ENCODE measurements at regions of chr5 and their contacts with region 1.

Region 1: DNA sequence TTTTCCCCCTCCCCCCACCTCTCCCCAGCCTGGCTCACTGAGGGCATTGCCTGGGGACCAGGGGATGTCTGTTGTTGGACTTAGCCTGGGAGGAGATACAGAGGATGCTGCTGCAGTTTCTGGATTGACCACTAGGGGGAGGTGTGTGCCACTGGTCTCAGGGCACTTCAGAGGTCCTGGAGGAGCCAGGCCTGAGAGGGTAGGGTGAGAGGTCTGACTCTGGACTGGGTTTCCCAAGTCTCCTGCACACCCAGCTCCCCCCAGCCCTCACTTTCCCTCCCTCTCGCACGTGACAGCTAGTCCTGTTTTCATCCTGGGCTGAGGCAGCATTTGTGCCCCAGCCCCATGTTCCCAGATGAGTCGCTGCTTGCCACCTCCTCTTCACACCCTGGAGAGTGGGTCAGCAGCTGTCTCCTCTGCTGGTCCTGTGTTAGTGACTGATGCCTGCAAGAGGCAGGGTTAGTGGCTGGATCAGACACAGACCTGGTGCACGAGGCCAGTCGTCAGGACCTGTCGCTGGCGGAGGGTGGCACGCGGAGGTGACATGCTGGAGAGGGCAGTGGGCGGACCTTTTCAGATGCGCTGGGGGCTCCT is 4.4 kb downstream of the IL3 start:
- DNase-seq: peak; percentile 57 to 86 (median 72)
- ATAC-seq: peak; percentile 75
- H3K4me3 ChIP-seq: no peak overlapping the region
- H3K4me3 Mint-ChIP-seq: no peak overlapping the region
- H3K27ac ChIP-seq: no peak overlapping the region
- H3K27ac Mint-ChIP-seq: no peak overlapping the region
- H3K4me1 ChIP-seq: peaks cover 29% of the 10 kb centered on the region
- H3K4me1 Mint-ChIP-seq: peaks cover 15% of the 10 kb centered on the region
- H3K27me3 ChIP-seq: no peaks in the 10 kb centered on the region
- H3K27me3 Mint-ChIP-seq: no peaks in the 10 kb centered on the region
- CTCF ChIP-seq: peak; percentile 82

Region 2: DNA sequence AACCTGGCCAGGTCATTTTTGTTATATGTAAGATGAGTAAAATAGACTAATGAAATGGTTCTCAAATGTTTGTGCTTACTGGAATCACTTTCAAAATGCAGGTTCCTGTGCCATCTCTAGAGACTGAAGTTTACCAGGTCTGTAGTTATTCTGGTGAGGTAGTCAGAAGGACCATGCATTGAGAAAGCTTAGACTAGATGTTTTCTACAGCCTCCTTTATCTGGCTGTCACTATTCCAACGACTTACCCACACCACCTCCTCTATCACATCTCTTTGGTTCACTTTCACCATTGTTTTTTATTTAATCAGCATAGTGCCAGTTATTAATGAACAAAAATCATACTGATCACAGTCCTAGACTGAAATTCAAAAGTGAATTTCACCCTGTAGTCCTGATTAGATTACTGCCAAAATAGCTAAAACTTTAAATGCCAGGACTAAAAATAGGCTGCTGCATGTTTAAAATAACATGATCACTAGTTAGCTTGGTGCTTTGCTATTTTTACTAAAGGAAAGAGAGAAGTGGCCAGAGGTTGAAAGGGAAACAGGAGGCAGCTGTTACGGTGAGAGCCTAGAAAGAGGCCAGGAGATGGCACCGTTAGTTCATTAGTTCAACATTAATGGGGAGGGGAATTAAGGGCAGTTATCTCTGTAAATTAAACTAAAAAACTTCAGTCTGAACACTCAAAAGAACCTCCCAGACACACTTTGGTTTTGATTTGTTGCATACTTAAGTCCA is 254.2 kb before region 1 on chr5:
- CTCF ChIA-PET with region 1: no interaction called
- POLR2A ChIA-PET with region 1: no interaction called
- intact Hi-C with region 1: loop called in 1 of 2 experiments (anchors 2 kb)
- DNase-seq: peak in 4 of 14 experiments; percentile 8 to 55 (median 34)
- ATAC-seq: peak; percentile 32
- H3K4me3 ChIP-seq: no peak overlapping the region
- H3K4me3 Mint-ChIP-seq: no peak overlapping the region
- H3K27ac ChIP-seq: no peak overlapping the region
- H3K27ac Mint-ChIP-seq: no peak overlapping the region
- H3K4me1 ChIP-seq: no peaks in the 10 kb centered on the region
- H3K4me1 Mint-ChIP-seq: no peaks in the 10 kb centered on the region
- H3K27me3 ChIP-seq: no peaks in the 10 kb centered on the region
- H3K27me3 Mint-ChIP-seq: no peaks in the 10 kb centered on the region
- CTCF ChIP-seq: peak; percentile 26

Region 3: GRCh38 chr5:131854134-131854533 is 210.7 kb before region 1 on chr5:
- CTCF ChIA-PET with region 1: no interaction called
- POLR2A ChIA-PET with region 1: no interaction called
- intact Hi-C with region 1: no loop called
- DNase-seq: peak in 3 of 14 experiments; percentile 9 to 59 (median 12)
- ATAC-seq: no peak
- H3K4me3 ChIP-seq: no peak overlapping the region
- H3K4me3 Mint-ChIP-seq: no peak overlapping the region
- H3K27ac ChIP-seq: no peak overlapping the region
- H3K27ac Mint-ChIP-seq: no peak overlapping the region
- H3K4me1 ChIP-seq: no peaks in the 10 kb centered on the region
- H3K4me1 Mint-ChIP-seq: peaks cover 20% of the 10 kb centered on the region
- H3K27me3 ChIP-seq: no peaks in the 10 kb centered on the region
- H3K27me3 Mint-ChIP-seq: no peaks in the 10 kb centered on the region
- CTCF ChIP-seq: no peak

Region 4: GRCh38 chr5:131974956-131975726 is 89.7 kb before region 1 on chr5:
- CTCF ChIA-PET with region 1: no interaction called
- POLR2A ChIA-PET with region 1: no interaction called
- intact Hi-C with region 1: no loop called
- DNase-seq: peak in 12 of 14 experiments; percentile 6 to 72 (median 32)
- ATAC-seq: peak; percentile 68
- H3K4me3 ChIP-seq: peak overlapping the region; percentile 33
- H3K4me3 Mint-ChIP-seq: peak overlapping the region; percentile 88
- H3K27ac ChIP-seq: peak overlapping the region; percentile 71 to 72
- H3K27ac Mint-ChIP-seq: peak overlapping the region; percentile 95
- H3K4me1 ChIP-seq: peaks cover 54% of the 10 kb centered on the region
- H3K4me1 Mint-ChIP-seq: peaks cover 80% of the 10 kb centered on the region
- H3K27me3 ChIP-seq: no peaks in the 10 kb centered on the region
- H3K27me3 Mint-ChIP-seq: no peaks in the 10 kb centered on the region
- CTCF ChIP-seq: no peak

Region 5: GRCh38 chr5:132027027-132027426 is 37.8 kb before region 1 on chr5:
- CTCF ChIA-PET with region 1: no interaction called
- POLR2A ChIA-PET with region 1: no interaction called
- intact Hi-C with region 1: no loop called
- DNase-seq: no peak
- ATAC-seq: no peak
- H3K4me3 ChIP-seq: no peak overlapping the region
- H3K4me3 Mint-ChIP-seq: no peak overlapping the region
- H3K27ac ChIP-seq: no peak overlapping the region
- H3K27ac Mint-ChIP-seq: no peak overlapping the region
- H3K4me1 ChIP-seq: peaks cover 33% of the 10 kb centered on the region
- H3K4me1 Mint-ChIP-seq: peaks cover 5% of the 10 kb centered on the region
- H3K27me3 ChIP-seq: no peaks in the 10 kb centered on the region
- H3K27me3 Mint-ChIP-seq: no peaks in the 10 kb centered on the region
- CTCF ChIP-seq: no peak

Region 6: GRCh38 chr5:132134384-132134783 is 69.5 kb after region 1 on chr5:
- CTCF ChIA-PET with region 1: interaction called, 4 read pairs
- POLR2A ChIA-PET with region 1: interaction called, 4 read pairs
- intact Hi-C with region 1: loop called (anchors 1 kb)
- DNase-seq: peak in 3 of 14 experiments; percentile 37 to 48 (median 44)
- ATAC-seq: no peak
- H3K4me3 ChIP-seq: no peak overlapping the region
- H3K4me3 Mint-ChIP-seq: no peak overlapping the region
- H3K27ac ChIP-seq: no peak overlapping the region
- H3K27ac Mint-ChIP-seq: no peak overlapping the region
- H3K4me1 ChIP-seq: peaks cover 2% of the 10 kb centered on the region
- H3K4me1 Mint-ChIP-seq: no peaks in the 10 kb centered on the region
- H3K27me3 ChIP-seq: no peaks in the 10 kb centered on the region
- H3K27me3 Mint-ChIP-seq: peaks cover 27% of the 10 kb centered on the region
- CTCF ChIP-seq: peak; percentile 29

Region 7: GRCh38 chr5:132386644-132387286 is 321.9 kb after region 1 on chr5:
- CTCF ChIA-PET with region 1: no interaction called
- POLR2A ChIA-PET with region 1: no interaction called
- intact Hi-C with region 1: loop called in 1 of 2 experiments (anchors 10 kb)
- DNase-seq: peak; percentile 66 to 90 (median 75)
- ATAC-seq: peak; percentile 92
- H3K4me3 ChIP-seq: no peak overlapping the region
- H3K4me3 Mint-ChIP-seq: no peak overlapping the region
- H3K27ac ChIP-seq: no peak overlapping the region
- H3K27ac Mint-ChIP-seq: peak overlapping the region; percentile 60
- H3K4me1 ChIP-seq: peaks cover 30% of the 10 kb centered on the region
- H3K4me1 Mint-ChIP-seq: peaks cover 31% of the 10 kb centered on the region
- H3K27me3 ChIP-seq: no peaks in the 10 kb centered on the region
- H3K27me3 Mint-ChIP-seq: no peaks in the 10 kb centered on the region
- CTCF ChIP-seq: peak; percentile 76